ENCODE measurements at regions of chr4 and their contacts with region 1.

Region 1: DNA sequence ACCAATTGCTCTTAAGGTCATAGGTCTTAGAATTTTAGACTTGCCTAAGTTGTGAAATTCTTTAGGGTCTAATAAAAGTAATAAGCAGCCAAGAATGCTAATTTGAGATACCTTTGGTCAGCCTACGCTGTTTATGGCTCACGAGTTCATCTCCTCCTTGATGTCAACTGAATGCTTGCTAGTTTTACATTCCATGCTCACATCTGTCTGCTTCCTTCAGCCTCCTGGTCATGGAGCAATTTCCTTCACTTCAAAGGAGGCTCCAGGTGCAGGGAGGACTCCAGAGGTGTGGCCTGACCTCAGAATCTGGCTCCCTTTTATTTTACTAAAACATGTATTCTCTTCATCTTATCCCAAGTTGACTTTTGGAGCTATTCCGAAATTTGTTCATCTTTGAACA is 23.3 kb upstream of the LNX1 start:
- DNase-seq: peak; percentile 63
- H3K4me3 ChIP-seq: no peak overlapping the region
- H3K4me3 Mint-ChIP-seq: no peak overlapping the region
- H3K27ac Mint-ChIP-seq: no peak overlapping the region
- H3K4me1 ChIP-seq: peaks cover 21% of the 10 kb centered on the region
- H3K4me1 Mint-ChIP-seq: no peaks in the 10 kb centered on the region
- H3K27me3 ChIP-seq: no peaks in the 10 kb centered on the region
- H3K27me3 Mint-ChIP-seq: no peaks in the 10 kb centered on the region
- CTCF ChIP-seq: peak; percentile 46

Region 2: GRCh38 chr4:53132132-53132896 is 482.3 kb before region 1 on chr4:
- CTCF ChIA-PET with region 1: no interaction called
- POLR2A ChIA-PET with region 1: no interaction called
- intact Hi-C with region 1: no loop called
- DNase-seq: no peak
- H3K4me3 ChIP-seq: no peak overlapping the region
- H3K4me3 Mint-ChIP-seq: no peak overlapping the region
- H3K27ac Mint-ChIP-seq: no peak overlapping the region
- H3K4me1 ChIP-seq: no peaks in the 10 kb centered on the region
- H3K4me1 Mint-ChIP-seq: no peaks in the 10 kb centered on the region
- H3K27me3 ChIP-seq: no peaks in the 10 kb centered on the region
- H3K27me3 Mint-ChIP-seq: no peaks in the 10 kb centered on the region
- CTCF ChIP-seq: no peak

Region 3: DNA sequence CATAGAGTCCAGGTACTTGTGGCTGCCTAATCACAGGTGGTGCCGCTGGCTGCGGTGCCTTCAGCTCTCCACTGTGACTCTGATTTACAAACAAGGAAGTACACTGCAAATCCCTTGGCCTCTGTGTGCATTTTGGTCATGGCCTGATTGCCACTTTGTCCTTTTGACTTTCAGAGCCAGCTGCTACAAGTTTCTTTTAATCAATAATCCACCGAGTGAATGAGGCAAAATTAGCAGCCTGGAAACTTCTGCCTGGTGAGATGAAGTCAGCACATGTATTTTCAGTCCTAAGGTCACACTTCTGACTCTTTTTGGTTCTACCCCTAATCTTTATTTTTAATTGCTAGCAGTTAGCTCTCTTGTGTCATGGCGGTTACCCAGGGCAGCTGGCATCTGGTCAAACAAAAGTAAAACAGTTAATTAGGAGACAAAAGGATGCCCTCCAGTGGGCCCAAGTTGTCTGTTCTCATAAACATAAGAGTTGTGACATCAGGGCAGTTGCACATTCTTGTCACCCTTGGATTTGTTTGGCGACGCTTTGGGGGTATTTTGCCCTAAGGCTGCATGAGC is 39.0 kb after region 1 on chr4:
- CTCF ChIA-PET with region 1: no interaction called
- POLR2A ChIA-PET with region 1: no interaction called
- intact Hi-C with region 1: loop called (anchors 5 kb)
- DNase-seq: peak in 1 of 2 experiments; percentile 5
- H3K4me3 ChIP-seq: no peak overlapping the region
- H3K4me3 Mint-ChIP-seq: no peak overlapping the region
- H3K27ac Mint-ChIP-seq: no peak overlapping the region
- H3K4me1 ChIP-seq: 0 out of 2 replicates have a peak, but pooled peaks cover 5% of the 10 kb centered on the region
- H3K4me1 Mint-ChIP-seq: peaks cover 18% of the 10 kb centered on the region
- H3K27me3 ChIP-seq: no peaks in the 10 kb centered on the region
- H3K27me3 Mint-ChIP-seq: no peaks in the 10 kb centered on the region
- CTCF ChIP-seq: no peak

Region 4: DNA sequence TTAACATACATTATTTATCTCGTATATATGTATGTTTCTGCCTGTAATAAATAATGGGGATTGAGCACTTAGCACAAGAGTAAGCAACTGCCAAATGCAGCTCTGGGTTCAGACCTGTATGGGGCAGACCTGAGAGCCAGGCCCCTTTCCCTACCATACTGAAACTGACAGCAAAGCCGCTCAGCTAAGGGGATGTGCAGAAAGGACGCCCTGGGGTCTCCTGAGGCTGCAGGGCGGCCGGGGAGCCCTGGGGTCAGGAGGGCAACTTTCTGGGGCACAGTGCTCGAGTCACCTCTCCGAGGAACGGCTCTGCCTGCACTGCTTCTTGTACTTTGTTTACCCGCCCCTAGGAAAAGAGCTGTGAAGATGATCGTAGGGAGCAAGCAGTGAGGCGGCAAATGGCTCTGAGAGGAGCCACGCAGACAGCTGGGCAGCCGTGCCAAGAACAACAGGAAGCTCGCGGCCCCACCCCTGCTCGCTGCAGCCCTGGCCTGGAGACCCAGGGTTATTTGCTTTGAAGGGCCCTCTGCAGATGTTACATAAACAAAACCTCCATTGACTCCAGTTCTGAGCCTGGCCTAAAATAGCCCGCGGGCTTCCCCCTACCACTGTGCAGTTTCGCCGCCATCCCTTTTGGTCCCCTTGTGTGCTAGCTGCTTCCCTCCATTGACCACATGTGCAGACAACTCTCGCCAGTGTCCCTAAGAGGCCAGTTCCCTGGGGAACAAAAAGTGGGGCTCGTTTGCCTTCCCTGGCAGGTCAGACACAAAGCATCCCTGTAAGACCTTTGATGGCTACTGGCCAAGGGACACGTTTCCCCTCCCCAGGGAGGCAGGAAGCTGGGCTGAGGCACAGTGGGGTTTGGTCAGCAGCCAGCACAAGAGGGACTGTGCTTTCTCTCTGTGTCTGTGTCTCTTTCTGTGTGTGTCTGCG is 88.0 kb after region 1 on chr4:
- CTCF ChIA-PET with region 1: no interaction called
- POLR2A ChIA-PET with region 1: no interaction called
- intact Hi-C with region 1: loop called (anchors 10 kb)
- DNase-seq: no peak
- H3K4me3 ChIP-seq: no peak overlapping the region
- H3K4me3 Mint-ChIP-seq: no peak overlapping the region
- H3K27ac Mint-ChIP-seq: no peak overlapping the region
- H3K4me1 ChIP-seq: no peaks in the 10 kb centered on the region
- H3K4me1 Mint-ChIP-seq: peaks cover 9% of the 10 kb centered on the region
- H3K27me3 ChIP-seq: no peaks in the 10 kb centered on the region
- H3K27me3 Mint-ChIP-seq: no peaks in the 10 kb centered on the region
- CTCF ChIP-seq: no peak

Region 5: DNA sequence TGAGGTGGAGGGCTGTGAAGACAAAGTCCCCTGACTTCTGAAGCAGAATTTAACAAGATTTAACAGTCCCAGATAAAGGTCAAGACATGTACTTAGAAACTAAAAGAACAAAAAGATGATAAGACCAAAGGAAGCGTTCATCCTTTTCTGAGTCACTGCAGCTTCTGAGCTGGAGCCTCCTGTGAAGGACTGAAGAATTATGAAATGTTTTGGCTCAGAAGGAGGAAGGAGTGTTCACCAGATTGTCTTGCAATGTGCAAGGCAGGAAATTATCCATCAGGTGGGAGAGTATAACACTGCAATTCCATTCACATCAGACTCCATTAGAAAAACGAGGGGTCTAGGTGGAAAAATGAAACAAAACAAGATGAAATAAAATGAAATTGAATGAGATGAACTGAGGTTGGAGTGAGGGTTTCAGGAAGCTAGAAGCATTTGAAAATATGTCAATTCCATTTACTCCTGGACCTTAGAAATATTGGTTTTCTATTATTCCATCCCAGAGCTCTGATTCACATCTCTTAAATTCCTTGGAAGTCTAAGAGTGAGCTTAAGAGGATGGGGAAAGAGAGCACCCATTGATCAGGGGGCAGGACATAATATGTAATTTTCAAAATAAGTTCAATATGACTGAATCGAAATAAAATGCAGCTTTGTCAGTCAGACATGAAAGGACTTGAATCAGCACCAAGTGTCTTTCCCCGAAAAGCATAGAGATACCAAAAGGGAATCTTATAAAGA is 162.8 kb after region 1 on chr4:
- CTCF ChIA-PET with region 1: no interaction called
- POLR2A ChIA-PET with region 1: no interaction called
- intact Hi-C with region 1: loop called (anchors 10 kb)
- DNase-seq: no peak
- H3K4me3 ChIP-seq: no peak overlapping the region
- H3K4me3 Mint-ChIP-seq: peak overlapping the region; percentile 50
- H3K27ac Mint-ChIP-seq: no peak overlapping the region
- H3K4me1 ChIP-seq: peaks cover 48% of the 10 kb centered on the region
- H3K4me1 Mint-ChIP-seq: peaks cover 27% of the 10 kb centered on the region
- H3K27me3 ChIP-seq: no peaks in the 10 kb centered on the region
- H3K27me3 Mint-ChIP-seq: no peaks in the 10 kb centered on the region
- CTCF ChIP-seq: no peak